ENCODE measurements at regions of chr4 and their contacts with region 1.

Region 1: GRCh38 chr4:81405894-81406401 is 65.8 kb downstream of the RASGEF1B start:
- DNase-seq: peak; percentile 52
- H3K4me3 Mint-ChIP-seq: no peak overlapping the region
- H3K27ac Mint-ChIP-seq: no peak overlapping the region
- H3K4me1 Mint-ChIP-seq: peaks cover 3% of the 10 kb centered on the region
- H3K27me3 Mint-ChIP-seq: no peaks in the 10 kb centered on the region

Region 2: GRCh38 chr4:81688085-81688484 is 282.1 kb after region 1 on chr4:
- CTCF ChIA-PET with region 1: no interaction called
- intact Hi-C with region 1: loop called (anchors 1 kb)
- DNase-seq: peak; percentile 17
- H3K4me3 Mint-ChIP-seq: no peak overlapping the region
- H3K27ac Mint-ChIP-seq: no peak overlapping the region
- H3K4me1 Mint-ChIP-seq: no peaks in the 10 kb centered on the region
- H3K27me3 Mint-ChIP-seq: no peaks in the 10 kb centered on the region

Region 3: GRCh38 chr4:81844717-81845116 is 438.8 kb after region 1 on chr4:
- CTCF ChIA-PET with region 1: interaction called, 3 read pairs
- intact Hi-C with region 1: loop called (anchors 1 kb)
- DNase-seq: peak; percentile 89
- H3K4me3 Mint-ChIP-seq: no peak overlapping the region
- H3K27ac Mint-ChIP-seq: no peak overlapping the region
- H3K4me1 Mint-ChIP-seq: peaks cover 13% of the 10 kb centered on the region
- H3K27me3 Mint-ChIP-seq: no peaks in the 10 kb centered on the region

Region 4: GRCh38 chr4:82201805-82202641 is 796.1 kb after region 1 on chr4:
- CTCF ChIA-PET with region 1: interaction called, 5 read pairs
- intact Hi-C with region 1: loop called (anchors 1 kb)
- DNase-seq: peak; percentile 77
- H3K4me3 Mint-ChIP-seq: no peak overlapping the region
- H3K27ac Mint-ChIP-seq: no peak overlapping the region
- H3K4me1 Mint-ChIP-seq: no peaks in the 10 kb centered on the region
- H3K27me3 Mint-ChIP-seq: no peaks in the 10 kb centered on the region